Breast epithelium (tissue), 4 donors: ENCODE measurements at regions of chr5 and their contacts with region 1.

Region 1: DNA sequence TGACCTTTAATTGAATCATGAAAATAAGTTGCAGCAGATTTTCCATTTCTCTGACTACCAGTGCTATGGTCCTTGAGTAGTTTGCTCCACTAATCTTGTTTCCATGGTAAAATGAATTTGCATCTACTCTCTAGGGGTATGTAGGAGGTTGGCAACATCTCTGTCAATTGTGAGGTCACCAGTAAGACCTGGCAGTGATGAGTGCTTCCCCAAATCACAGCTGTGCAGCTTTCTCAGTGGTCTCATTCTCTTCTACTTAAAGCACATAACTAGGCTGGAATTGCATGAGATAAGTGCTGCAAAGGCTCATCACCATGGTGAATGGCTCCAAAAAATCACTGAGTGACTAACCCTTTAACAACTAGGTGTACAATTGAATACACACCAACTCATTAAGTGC is 36.3 kb downstream of the ADAMTS19 start:
- DNase-seq: no peak
- H3K4me3 ChIP-seq: no peak overlapping the region
- H3K27ac ChIP-seq: no peak overlapping the region
- H3K4me1 ChIP-seq: no peaks in the 10 kb centered on the region
- H3K27me3 ChIP-seq: no peaks in the 10 kb centered on the region
- CTCF ChIP-seq: no peak
- POLR2A ChIP-seq: no peak

Region 2: GRCh38 chr5:129223178-129223577 is 273.2 kb before region 1 on chr5:
- intact Hi-C with region 1: loop called (anchors 5 kb)
- DNase-seq: no peak
- H3K4me3 ChIP-seq: no peak overlapping the region
- H3K27ac ChIP-seq: no peak overlapping the region
- H3K4me1 ChIP-seq: no peaks in the 10 kb centered on the region
- H3K27me3 ChIP-seq: no peaks in the 10 kb centered on the region
- CTCF ChIP-seq: no peak
- POLR2A ChIP-seq: no peak

Region 3: GRCh38 chr5:129477532-129477931 is 18.9 kb before region 1 on chr5:
- intact Hi-C with region 1: no loop called
- DNase-seq: no peak
- H3K4me3 ChIP-seq: no peak overlapping the region
- H3K27ac ChIP-seq: no peak overlapping the region
- H3K4me1 ChIP-seq: no peaks in the 10 kb centered on the region
- H3K27me3 ChIP-seq: no peaks in the 10 kb centered on the region
- CTCF ChIP-seq: no peak
- POLR2A ChIP-seq: no peak

Region 4: GRCh38 chr5:130289132-130290088 is 793.0 kb after region 1 on chr5:
- intact Hi-C with region 1: no loop called
- DNase-seq: no peak
- H3K4me3 ChIP-seq: no peak overlapping the region
- H3K27ac ChIP-seq: no peak overlapping the region
- H3K4me1 ChIP-seq: no peaks in the 10 kb centered on the region
- H3K27me3 ChIP-seq: no peaks in the 10 kb centered on the region
- CTCF ChIP-seq: no peak
- POLR2A ChIP-seq: no peak